Mammary epithelial cell (primary cell): ENCODE measurements at regions of chr18 and their contacts with region 1.

Region 1: DNA sequence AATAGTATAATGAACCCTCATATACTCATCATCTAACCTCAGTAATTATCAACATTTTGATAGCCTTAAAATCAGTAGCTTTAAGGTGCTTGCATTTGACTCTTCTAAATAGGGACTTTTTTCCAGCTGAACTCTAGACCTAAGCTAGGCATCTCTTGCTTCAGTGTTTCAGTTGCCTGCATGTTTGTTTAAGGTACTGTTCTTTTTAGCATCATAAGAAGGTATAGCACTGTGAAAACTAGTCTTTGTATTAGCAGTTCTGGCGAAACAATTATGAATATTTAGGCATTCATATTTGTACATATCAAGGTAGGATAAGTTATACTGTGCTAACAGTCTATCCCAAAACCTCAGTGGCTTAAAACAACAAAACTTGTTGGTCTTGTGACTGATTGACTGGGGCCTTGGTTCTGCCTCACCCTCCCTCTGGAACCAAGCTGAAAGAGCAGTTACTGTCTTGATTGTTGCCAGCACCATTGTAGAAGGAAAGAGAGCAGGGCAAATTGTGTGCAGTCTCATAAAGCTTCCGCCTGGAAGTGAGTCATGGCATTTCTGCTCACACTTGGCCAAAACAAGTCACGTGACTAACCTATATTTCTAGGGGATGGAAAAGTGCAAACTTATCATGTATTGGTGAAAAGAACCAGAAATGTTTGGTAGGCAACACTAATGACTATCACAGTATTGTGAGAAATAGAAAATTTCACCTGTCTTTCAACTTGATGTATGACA is 24.3 kb downstream of the GALNT1 start:
- DNase-seq: peak; percentile 32
- H3K4me3 ChIP-seq: no peak overlapping the region
- H3K27ac ChIP-seq: no peak overlapping the region
- H3K4me1 ChIP-seq: peaks cover 6% of the 10 kb centered on the region
- H3K27me3 ChIP-seq: no peaks in the 10 kb centered on the region
- CTCF ChIP-seq: no peak

Region 2: DNA sequence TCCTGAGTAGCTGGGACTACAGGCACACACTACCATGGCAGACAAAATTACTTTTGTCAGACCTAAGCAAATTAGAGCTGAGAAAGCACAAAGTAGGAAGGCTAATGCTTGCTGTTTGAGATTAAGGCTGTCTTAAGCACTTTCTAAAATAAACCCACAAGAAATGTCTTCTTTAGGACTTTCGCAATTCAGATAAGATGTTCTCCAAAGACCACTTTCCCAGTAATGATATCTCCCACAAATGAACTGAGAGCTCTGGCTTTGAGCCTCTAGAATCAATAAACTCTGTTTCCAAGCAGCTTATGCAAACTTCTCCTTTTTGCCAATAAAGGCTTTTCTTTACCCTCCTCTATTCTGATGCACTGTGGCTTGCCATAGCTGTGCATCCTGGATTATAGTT is 56.3 kb before region 1 on chr18:
- CTCF ChIA-PET with region 1: no interaction called
- dilution Hi-C with region 1: no loop called
- in situ Hi-C with region 1: no loop called
- intact Hi-C with region 1: no loop called
- DNase-seq: no peak
- H3K4me3 ChIP-seq: no peak overlapping the region
- H3K27ac ChIP-seq: no peak overlapping the region
- H3K4me1 ChIP-seq: no peaks in the 10 kb centered on the region
- H3K27me3 ChIP-seq: no peaks in the 10 kb centered on the region
- CTCF ChIP-seq: no peak

Region 3: GRCh38 chr18:35573531-35573930 is 32.3 kb before region 1 on chr18:
- CTCF ChIA-PET with region 1: no interaction called
- dilution Hi-C with region 1: loop called (anchors 5 kb)
- in situ Hi-C with region 1: no loop called
- intact Hi-C with region 1: no loop called
- DNase-seq: no peak
- H3K4me3 ChIP-seq: no peak overlapping the region
- H3K27ac ChIP-seq: no peak overlapping the region
- H3K4me1 ChIP-seq: no peaks in the 10 kb centered on the region
- H3K27me3 ChIP-seq: no peaks in the 10 kb centered on the region
- CTCF ChIP-seq: no peak

Region 4: GRCh38 chr18:35637226-35637625 is 31.4 kb after region 1 on chr18:
- CTCF ChIA-PET with region 1: no interaction called
- dilution Hi-C with region 1: no loop called
- in situ Hi-C with region 1: no loop called
- intact Hi-C with region 1: loop called (anchors 1 kb)
- DNase-seq: no peak
- H3K4me3 ChIP-seq: no peak overlapping the region
- H3K27ac ChIP-seq: no peak overlapping the region
- H3K4me1 ChIP-seq: peaks cover 10% of the 10 kb centered on the region
- H3K27me3 ChIP-seq: no peaks in the 10 kb centered on the region
- CTCF ChIP-seq: no peak